Heart left ventricle (tissue), 16 donors: ENCODE measurements at regions of chr11 and their contacts with region 1.

Region 1: GRCh38 chr11:63945477-63946163 is 6.8 kb downstream of the NAA40 start:
- DNase-seq: peak; percentile 65 to 78 (median 70)
- ATAC-seq: peak; percentile 55 to 88 (median 83)
- H3K4me3 ChIP-seq: peak overlapping the region in 10 of 12 donors; percentile 0 to 46 (median 27)
- H3K27ac ChIP-seq: peak overlapping the region; percentile 12 to 83 (median 68)
- H3K4me1 ChIP-seq: peaks cover 0 to 31% (median 22%) of the 10 kb centered on the region in 12 donors
- H3K27me3 ChIP-seq: no peaks in the 10 kb centered on the region
- CTCF ChIP-seq: peak; percentile 55 to 85 (median 75)
- POLR2A ChIP-seq: no peak

Region 2: GRCh38 chr11:63871962-63872799 is 73.4 kb before region 1 on chr11:
- intact Hi-C with region 1: loop called in 1 of 10 experiments (anchors 10 kb)
- DNase-seq: peak; percentile 76 to 93 (median 86)
- ATAC-seq: peak; percentile 93 to 96 (median 96)
- H3K4me3 ChIP-seq: peak overlapping the region in 5 of 12 donors; percentile 13 to 30 (median 23)
- H3K27ac ChIP-seq: peak overlapping the region; percentile 37 to 88 (median 77)
- H3K4me1 ChIP-seq: peaks cover 15 to 99% (median 69%) of the 10 kb centered on the region in 12 donors
- H3K27me3 ChIP-seq: no peaks in the 10 kb centered on the region
- CTCF ChIP-seq: peak; percentile 13 to 84 (median 50)
- POLR2A ChIP-seq: peak in 1 of 2 donors; percentile 30

Region 3: DNA sequence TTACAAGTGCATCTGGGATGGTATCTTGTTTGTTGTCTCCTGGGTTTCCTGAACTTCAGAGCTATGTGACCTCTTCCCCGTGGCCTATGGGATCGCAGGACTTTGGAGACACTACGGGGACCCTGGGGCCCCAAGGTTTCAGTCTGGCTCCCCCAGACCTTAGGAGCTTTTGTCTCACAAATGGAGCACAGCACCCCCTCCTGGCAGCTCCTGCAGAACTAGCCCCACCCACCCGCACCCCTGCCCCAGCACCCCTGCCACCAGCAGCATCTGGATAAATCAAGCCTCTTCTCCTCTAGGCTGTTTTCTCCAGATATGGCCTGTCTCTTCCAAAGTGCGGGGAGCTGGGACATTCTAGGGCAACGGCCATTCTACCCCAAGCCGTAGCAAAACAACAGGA is 39.0 kb before region 1 on chr11:
- intact Hi-C with region 1: loop called in 1 of 10 experiments (anchors 5 kb)
- DNase-seq: no peak
- ATAC-seq: no peak
- H3K4me3 ChIP-seq: no peak overlapping the region
- H3K27ac ChIP-seq: no peak overlapping the region
- H3K4me1 ChIP-seq: peaks cover 0 to 35% (median 6%) of the 10 kb centered on the region in 12 donors
- H3K27me3 ChIP-seq: no peaks in the 10 kb centered on the region
- CTCF ChIP-seq: peak in 11 of 12 donors; percentile 9 to 47 (median 22)
- POLR2A ChIP-seq: no peak